ENCODE measurements at regions of chr5 and their contacts with region 1.

Region 1: DNA sequence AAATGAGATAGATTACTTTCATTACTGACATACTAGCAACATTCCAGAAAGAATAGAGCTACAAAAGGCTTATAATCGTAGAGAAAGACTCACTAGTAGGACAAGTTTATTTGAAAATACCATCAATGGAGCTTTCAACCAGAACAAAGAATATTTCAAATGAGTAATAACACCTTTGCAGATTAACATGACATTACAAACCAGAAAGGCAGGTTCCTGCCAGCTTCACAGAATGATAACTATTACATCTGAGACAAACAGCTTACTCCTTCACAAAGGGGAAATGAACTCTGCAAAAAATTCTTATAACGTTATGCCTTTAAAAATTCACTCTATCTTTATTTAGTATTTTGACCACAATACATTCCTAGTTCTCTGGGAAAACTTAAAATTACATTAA is 103.1 kb downstream of the EPB41L4A start:
- DNase-seq: peak; percentile 16 to 81
- H3K4me3 ChIP-seq: no peak overlapping the region
- H3K27ac ChIP-seq: no peak overlapping the region
- H3K4me1 ChIP-seq: no peaks in the 10 kb centered on the region; the same call in 1 of the 2 replicates
- H3K27me3 ChIP-seq: no peaks in the 10 kb centered on the region
- CTCF ChIP-seq: no peak

Region 2: DNA sequence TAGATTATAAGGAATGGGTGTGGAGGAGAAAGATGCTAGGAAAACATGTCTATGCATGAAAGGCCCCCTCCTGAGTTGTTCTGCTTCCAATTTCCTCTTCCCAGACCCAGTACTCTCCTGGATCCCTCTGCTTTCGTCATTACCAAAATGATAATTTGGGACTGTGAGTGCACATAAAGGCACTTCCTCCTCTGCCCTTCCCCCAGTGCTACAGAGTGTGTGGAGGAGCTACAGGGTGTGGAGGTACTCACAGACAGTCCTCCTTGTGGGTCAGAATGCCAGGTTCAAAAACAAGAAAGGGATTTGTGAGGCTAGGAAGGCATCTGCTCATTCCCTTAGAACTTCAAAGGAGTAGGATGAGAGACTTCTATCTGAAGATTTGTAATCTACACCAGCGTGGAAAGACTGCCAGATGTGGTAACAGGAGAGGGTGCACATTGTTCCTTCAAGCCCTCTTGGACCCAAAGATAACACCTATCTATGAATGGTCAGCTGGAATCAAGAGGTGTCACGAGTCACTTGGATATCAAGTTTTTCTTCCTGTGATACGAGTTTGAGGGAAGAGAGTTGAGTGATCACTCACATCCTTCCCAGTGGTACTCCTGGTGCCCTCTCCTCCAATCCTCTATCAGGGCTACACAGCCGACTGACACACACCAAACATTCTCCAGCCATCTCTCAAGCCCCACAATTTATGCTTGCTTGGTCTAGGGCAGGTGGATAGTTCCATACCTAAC is 98.0 kb before region 1 on chr5:
- CTCF ChIA-PET with region 1: no interaction called
- POLR2A ChIA-PET with region 1: no interaction called
- intact Hi-C with region 1: no loop called
- DNase-seq: no peak
- H3K4me3 ChIP-seq: no peak overlapping the region
- H3K27ac ChIP-seq: no peak overlapping the region
- H3K4me1 ChIP-seq: no peaks in the 10 kb centered on the region
- H3K27me3 ChIP-seq: no peaks in the 10 kb centered on the region
- CTCF ChIP-seq: no peak

Region 3: DNA sequence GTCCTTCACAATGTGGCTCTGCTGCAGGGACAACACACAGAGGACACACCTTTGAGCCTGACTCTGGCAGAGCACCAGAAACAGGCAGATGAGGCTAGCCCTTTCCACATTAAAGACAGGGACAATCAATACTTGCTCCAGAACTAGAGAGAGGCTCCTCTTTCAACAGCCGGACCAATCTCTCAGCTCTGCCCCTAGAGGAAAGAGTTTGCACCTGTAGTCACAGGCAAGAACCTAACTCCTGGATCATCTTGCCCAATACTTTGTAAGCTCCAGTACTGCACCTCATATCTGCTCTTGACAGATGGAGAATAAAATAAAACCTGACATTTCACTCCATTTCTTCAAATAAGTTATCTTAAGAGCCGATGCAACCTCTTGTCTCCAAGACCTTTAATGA is 51.0 kb after region 1 on chr5:
- CTCF ChIA-PET with region 1: interaction called, 11 read pairs
- POLR2A ChIA-PET with region 1: no interaction called
- intact Hi-C with region 1: no loop called
- DNase-seq: no peak
- H3K4me3 ChIP-seq: no peak overlapping the region
- H3K27ac ChIP-seq: no peak overlapping the region
- H3K4me1 ChIP-seq: no peaks in the 10 kb centered on the region
- H3K27me3 ChIP-seq: no peaks in the 10 kb centered on the region
- CTCF ChIP-seq: no peak; the same call in 1 of the 2 replicates

Measured in PC-9 (cell line).